B cell (primary cell): ENCODE measurements at regions of chr19 and their contacts with region 1.

Region 1: DNA sequence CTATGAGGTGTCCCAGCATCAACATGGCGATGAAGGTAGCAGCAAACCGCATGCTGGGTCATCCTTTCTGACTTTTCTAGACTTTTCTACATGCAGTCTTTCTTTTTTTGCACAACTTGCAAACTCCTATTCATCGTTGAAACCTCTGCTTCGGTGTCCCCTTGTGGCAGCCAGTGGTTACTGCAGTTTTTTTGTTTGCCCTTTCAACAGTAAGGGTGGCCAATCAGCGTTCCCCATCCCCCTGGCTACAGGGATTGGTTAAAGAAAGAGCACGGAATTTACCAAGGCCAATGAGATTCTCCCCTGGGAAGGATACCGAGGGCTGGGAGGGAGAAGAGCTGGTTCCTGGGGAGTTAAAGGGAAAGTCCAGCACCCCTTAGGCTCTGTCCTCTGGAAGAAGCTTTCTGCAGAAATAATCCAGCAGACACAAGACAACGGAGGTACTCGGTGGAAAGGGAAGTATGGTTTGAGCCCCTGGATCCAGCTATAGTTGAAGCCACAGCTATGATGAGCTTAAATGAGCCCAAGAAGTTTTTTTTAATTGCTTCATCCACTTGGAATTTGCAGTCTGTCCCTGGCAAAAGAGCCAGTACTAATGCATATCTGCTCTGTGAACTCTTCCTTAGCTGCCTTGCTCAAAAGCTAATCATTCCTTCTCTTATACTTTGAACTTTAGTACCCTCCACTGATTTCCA is 5.6 kb upstream of the LSM4 start:
- DNase-seq: peak; percentile 92
- ATAC-seq: peak; percentile 98
- H3K4me3 ChIP-seq: peak overlapping the region; percentile 16 to 62 (median 32)
- H3K4me3 Mint-ChIP-seq: peak overlapping the region; percentile 57
- H3K27ac ChIP-seq: no peak overlapping the region
- H3K27ac Mint-ChIP-seq: no peak overlapping the region
- H3K4me1 ChIP-seq: peaks cover 11 to 15% of the 10 kb centered on the region in 2 donors
- H3K4me1 Mint-ChIP-seq: peaks cover 16% of the 10 kb centered on the region
- H3K27me3 ChIP-seq: peaks cover 0 to 7% (median 0%) of the 10 kb centered on the region in 4 experiments
- H3K27me3 Mint-ChIP-seq: no peaks in the 10 kb centered on the region
- CTCF ChIP-seq: peak; percentile 87

Region 2: DNA sequence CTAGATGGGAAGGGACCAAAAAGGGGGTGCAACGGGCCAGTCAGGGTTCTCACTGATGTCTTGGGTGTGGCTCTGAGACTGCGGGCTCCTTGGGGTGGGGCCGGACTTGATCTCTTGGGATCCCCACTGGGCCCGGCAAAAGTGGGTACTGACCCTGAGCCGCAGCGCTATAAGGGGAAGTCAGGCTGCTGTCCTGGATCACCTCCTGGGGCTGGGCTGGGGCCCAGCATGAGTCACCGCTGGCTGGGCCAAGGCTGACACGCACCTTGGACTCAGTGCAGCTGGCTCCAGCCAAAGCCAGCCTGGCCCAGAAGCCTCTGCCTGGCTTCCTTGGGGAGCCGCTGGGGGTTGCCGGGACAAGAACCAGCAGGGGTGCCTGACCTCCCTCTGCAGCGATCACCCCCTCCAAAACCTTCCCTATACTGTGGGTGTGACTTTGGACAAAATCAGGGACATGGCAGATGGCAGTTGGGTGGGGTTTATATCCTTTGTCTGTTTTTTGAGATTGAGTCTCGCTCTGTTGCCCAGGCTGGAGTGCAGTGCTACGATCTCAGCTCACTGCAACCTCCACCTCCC is 53.6 kb before region 1 on chr19:
- CTCF ChIA-PET with region 1: interaction called, 259 read pairs
- POLR2A ChIA-PET with region 1: interaction called, 128 read pairs
- intact Hi-C with region 1: loop called (anchors 1 kb)
- DNase-seq: no peak
- ATAC-seq: no peak
- H3K4me3 ChIP-seq: no peak overlapping the region
- H3K4me3 Mint-ChIP-seq: no peak overlapping the region
- H3K27ac ChIP-seq: no peak overlapping the region
- H3K27ac Mint-ChIP-seq: no peak overlapping the region
- H3K4me1 ChIP-seq: peaks cover 11 to 33% of the 10 kb centered on the region in 2 donors
- H3K4me1 Mint-ChIP-seq: peaks cover 39% of the 10 kb centered on the region
- H3K27me3 ChIP-seq: no peaks in the 10 kb centered on the region
- H3K27me3 Mint-ChIP-seq: no peaks in the 10 kb centered on the region
- CTCF ChIP-seq: no peak

Region 3: DNA sequence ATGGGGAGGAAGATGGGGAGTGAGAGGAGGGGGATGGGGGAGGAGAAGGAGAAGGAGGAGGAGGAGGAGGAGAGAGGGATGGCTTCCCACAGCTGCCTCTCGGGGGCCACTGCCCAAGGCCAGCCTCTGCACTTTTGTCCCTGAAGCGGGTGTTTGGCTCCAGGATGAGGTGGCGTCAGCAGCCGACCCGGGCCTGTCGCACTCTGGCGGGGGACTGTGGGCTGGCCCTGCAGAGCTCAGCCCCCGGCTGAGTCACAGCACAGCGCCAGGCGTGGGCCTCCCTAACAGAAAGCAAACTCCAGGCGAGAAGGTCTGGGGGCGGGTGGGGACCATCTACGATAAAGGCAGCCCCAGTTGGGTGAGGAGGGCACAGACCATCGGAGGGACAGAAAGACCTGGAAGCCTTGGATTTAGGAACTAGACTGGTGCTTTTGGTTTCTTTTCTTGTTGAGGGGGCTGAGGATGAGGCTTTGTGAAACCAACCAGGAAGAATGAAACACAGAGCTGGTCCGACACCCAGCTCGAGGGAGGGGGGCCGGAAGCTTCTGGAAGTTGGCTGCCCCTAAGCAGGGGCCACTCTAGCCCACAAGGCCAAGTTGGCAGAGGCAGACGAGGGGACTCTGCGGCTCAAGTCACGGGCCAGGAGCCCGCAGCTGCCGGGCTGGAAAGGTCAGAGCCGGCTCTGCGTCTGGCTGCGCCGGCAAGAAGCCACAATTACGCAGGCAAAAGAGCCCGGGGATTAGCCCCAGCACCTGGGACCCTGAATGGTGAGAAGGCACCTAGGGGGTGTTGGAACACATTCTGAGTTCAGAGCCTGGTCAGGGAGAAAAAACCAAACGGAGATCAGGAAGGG is 23.8 kb before region 1 on chr19:
- CTCF ChIA-PET with region 1: interaction called, 9 read pairs
- POLR2A ChIA-PET with region 1: interaction called, 4 read pairs
- intact Hi-C with region 1: loop called (anchors 1 kb)
- DNase-seq: peak; percentile 89
- ATAC-seq: peak; percentile 64
- H3K4me3 ChIP-seq: peak overlapping the region in 4 of 5 experiments; percentile 51 to 60 (median 54)
- H3K4me3 Mint-ChIP-seq: peak overlapping the region; percentile 95
- H3K27ac ChIP-seq: peak overlapping the region; percentile 98 to 99
- H3K27ac Mint-ChIP-seq: peak overlapping the region; percentile 100
- H3K4me1 ChIP-seq: peaks cover 44 to 68% of the 10 kb centered on the region in 2 donors
- H3K4me1 Mint-ChIP-seq: peaks cover 44% of the 10 kb centered on the region
- H3K27me3 ChIP-seq: no peaks in the 10 kb centered on the region
- H3K27me3 Mint-ChIP-seq: no peaks in the 10 kb centered on the region
- CTCF ChIP-seq: no peak

Region 4: GRCh38 chr19:18340190-18340989 is 11.9 kb after region 1 on chr19 and contains the start of gene PGPEP1:
- CTCF ChIA-PET with region 1: interaction called, 22 read pairs
- POLR2A ChIA-PET with region 1: interaction called, 9 read pairs
- intact Hi-C with region 1: loop called (anchors 2 kb)
- DNase-seq: peak; percentile 81
- ATAC-seq: peak; percentile 66
- H3K4me3 ChIP-seq: peak within 1 kb of the TSS; percentile 41 to 88 (median 81)
- H3K4me3 Mint-ChIP-seq: peak within 1 kb of the TSS; percentile 79
- H3K27ac ChIP-seq: peak within 1 kb of the TSS; percentile 52 to 70
- H3K27ac Mint-ChIP-seq: peak within 1 kb of the TSS; percentile 73
- H3K4me1 ChIP-seq: peaks cover 13 to 18% of the 10 kb centered on the region in 2 donors
- H3K4me1 Mint-ChIP-seq: peaks cover 13% of the 10 kb centered on the region
- H3K27me3 ChIP-seq: no peaks in the 10 kb centered on the region
- H3K27me3 Mint-ChIP-seq: peaks cover 3% of the 10 kb centered on the region
- CTCF ChIP-seq: no peak
- total RNA-seq, gene PGPEP1: 14.1 and 17.6 TPM in 2 replicates

Region 5: GRCh38 chr19:18388100-18388959 is 59.8 kb after region 1 on chr19:
- CTCF ChIA-PET with region 1: interaction called, 16 read pairs
- POLR2A ChIA-PET with region 1: no interaction called
- intact Hi-C with region 1: no loop called
- DNase-seq: peak; percentile 93
- ATAC-seq: peak; percentile 85
- H3K4me3 ChIP-seq: peak overlapping the region in 4 of 5 experiments; percentile 26 to 51 (median 40)
- H3K4me3 Mint-ChIP-seq: peak overlapping the region; percentile 82
- H3K27ac ChIP-seq: no peak overlapping the region
- H3K27ac Mint-ChIP-seq: peak overlapping the region; percentile 70
- H3K4me1 ChIP-seq: peaks cover 34 to 36% of the 10 kb centered on the region in 2 donors
- H3K4me1 Mint-ChIP-seq: peaks cover 34% of the 10 kb centered on the region
- H3K27me3 ChIP-seq: peaks cover 0 to 38% (median 17%) of the 10 kb centered on the region in 4 experiments
- H3K27me3 Mint-ChIP-seq: peaks cover 5% of the 10 kb centered on the region
- CTCF ChIP-seq: peak; percentile 99

Region 6: GRCh38 chr19:18408053-18408476 is 79.6 kb after region 1 on chr19:
- CTCF ChIA-PET with region 1: interaction called, 41 read pairs
- POLR2A ChIA-PET with region 1: no interaction called
- intact Hi-C with region 1: loop called (anchors 1 kb)
- DNase-seq: peak; percentile 90
- ATAC-seq: peak; percentile 90
- H3K4me3 ChIP-seq: no peak overlapping the region
- H3K4me3 Mint-ChIP-seq: peak overlapping the region; percentile 44
- H3K27ac ChIP-seq: peak overlapping the region in 1 of 2 donors; percentile 15
- H3K27ac Mint-ChIP-seq: peak overlapping the region; percentile 89
- H3K4me1 ChIP-seq: peaks cover 18 to 19% of the 10 kb centered on the region in 2 donors
- H3K4me1 Mint-ChIP-seq: peaks cover 23% of the 10 kb centered on the region
- H3K27me3 ChIP-seq: peaks cover 0 to 20% (median 7%) of the 10 kb centered on the region in 4 experiments
- H3K27me3 Mint-ChIP-seq: peaks cover 18% of the 10 kb centered on the region
- CTCF ChIP-seq: peak; percentile 31

Region 7: DNA sequence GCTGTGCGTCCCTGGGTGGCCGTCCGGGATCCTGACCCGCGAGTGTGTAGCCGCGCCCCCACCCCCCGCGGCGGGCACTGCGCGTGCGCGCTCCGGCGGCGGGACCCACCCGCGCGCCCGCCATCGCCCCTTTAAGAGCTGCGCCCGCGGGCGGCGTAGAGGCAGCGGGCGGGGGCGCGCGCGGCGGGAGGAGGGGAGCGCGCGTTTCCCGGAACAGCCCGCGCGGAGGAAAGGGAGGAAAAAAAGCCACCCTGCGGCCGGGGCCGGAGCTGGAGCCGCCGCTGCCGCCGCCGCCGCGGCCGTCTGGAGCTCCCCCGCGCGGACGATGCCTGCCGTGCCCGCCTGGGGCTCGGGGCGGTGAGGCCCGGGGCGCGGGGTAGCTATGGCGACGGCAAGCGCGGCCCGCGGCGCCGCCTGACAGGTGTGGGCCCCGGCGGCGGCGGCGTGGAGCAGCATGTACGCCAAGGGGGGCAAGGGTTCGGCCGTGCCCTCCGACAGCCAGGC is 90.8 kb after region 1 on chr19 and contains the start of gene SSBP4:
- CTCF ChIA-PET with region 1: interaction called, 41 read pairs
- POLR2A ChIA-PET with region 1: no interaction called
- intact Hi-C with region 1: no loop called
- DNase-seq: peak; percentile 88
- ATAC-seq: peak; percentile 64
- H3K4me3 ChIP-seq: peak within 1 kb of the TSS in 4 of 5 experiments; percentile 41 to 67 (median 52)
- H3K4me3 Mint-ChIP-seq: peak within 1 kb of the TSS; percentile 85
- H3K27ac ChIP-seq: no peak within 1 kb of the TSS
- H3K27ac Mint-ChIP-seq: peak within 1 kb of the TSS; percentile 71
- H3K4me1 ChIP-seq: peaks cover 70 to 77% of the 10 kb centered on the region in 2 donors
- H3K4me1 Mint-ChIP-seq: peaks cover 66% of the 10 kb centered on the region
- H3K27me3 ChIP-seq: peaks cover 0 to 50% (median 31%) of the 10 kb centered on the region in 4 experiments
- H3K27me3 Mint-ChIP-seq: peaks cover 31% of the 10 kb centered on the region
- CTCF ChIP-seq: peak; percentile 55
- total RNA-seq, gene SSBP4: 37.0 and 43.5 TPM in 2 replicates